BJ (cell line): ENCODE measurements at regions of chr11 and their contacts with region 1.

Region 1: GRCh38 chr11:75388386-75389275 is 10.7 kb upstream of the RPS3 start:
- DNase-seq: no peak
- H3K4me3 ChIP-seq: no peak overlapping the region
- H3K27me3 ChIP-seq: peaks cover 9% of the 10 kb centered on the region
- CTCF ChIP-seq: peak; percentile 81

Region 2: GRCh38 chr11:75103380-75104026 is 285.1 kb before region 1 on chr11:
- CTCF ChIA-PET with region 1: no interaction called
- POLR2A ChIA-PET with region 1: no interaction called
- DNase-seq: peak; percentile 29
- H3K4me3 ChIP-seq: no peak overlapping the region
- H3K27me3 ChIP-seq: no peaks in the 10 kb centered on the region; the same call in 1 of the 2 replicates
- CTCF ChIP-seq: no peak

Region 3: DNA sequence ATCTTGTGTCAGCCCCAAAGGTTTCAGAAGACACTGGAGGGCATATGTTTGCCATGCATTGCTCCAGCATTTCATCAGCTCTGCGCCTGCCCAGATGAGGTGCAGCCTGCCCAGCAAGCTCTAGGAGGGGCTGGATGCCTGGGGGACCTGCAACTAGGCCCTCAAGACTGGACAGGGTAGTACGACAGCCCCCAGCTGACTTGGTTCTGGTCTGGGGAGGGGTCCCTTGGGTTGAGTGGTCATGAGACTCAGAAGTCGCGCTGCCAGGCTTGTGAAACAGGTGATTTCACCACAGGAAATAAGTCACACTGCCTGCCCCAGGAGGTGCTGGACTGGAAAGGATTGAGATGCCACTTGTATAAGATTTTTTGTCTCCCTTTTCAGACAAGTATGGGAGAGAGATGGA is 124.7 kb before region 1 on chr11:
- CTCF ChIA-PET with region 1: no interaction called
- POLR2A ChIA-PET with region 1: no interaction called
- DNase-seq: no peak
- H3K4me3 ChIP-seq: no peak overlapping the region
- H3K27me3 ChIP-seq: peaks cover 2% of the 10 kb centered on the region; the same call in 1 of the 2 replicates
- CTCF ChIP-seq: no peak

Region 4: GRCh38 chr11:75280227-75280701 is 108.4 kb before region 1 on chr11:
- CTCF ChIA-PET with region 1: interaction called, 389 read pairs
- POLR2A ChIA-PET with region 1: no interaction called
- DNase-seq: no peak
- H3K4me3 ChIP-seq: no peak overlapping the region
- H3K27me3 ChIP-seq: no peaks in the 10 kb centered on the region
- CTCF ChIP-seq: peak; percentile 92

Region 5: DNA sequence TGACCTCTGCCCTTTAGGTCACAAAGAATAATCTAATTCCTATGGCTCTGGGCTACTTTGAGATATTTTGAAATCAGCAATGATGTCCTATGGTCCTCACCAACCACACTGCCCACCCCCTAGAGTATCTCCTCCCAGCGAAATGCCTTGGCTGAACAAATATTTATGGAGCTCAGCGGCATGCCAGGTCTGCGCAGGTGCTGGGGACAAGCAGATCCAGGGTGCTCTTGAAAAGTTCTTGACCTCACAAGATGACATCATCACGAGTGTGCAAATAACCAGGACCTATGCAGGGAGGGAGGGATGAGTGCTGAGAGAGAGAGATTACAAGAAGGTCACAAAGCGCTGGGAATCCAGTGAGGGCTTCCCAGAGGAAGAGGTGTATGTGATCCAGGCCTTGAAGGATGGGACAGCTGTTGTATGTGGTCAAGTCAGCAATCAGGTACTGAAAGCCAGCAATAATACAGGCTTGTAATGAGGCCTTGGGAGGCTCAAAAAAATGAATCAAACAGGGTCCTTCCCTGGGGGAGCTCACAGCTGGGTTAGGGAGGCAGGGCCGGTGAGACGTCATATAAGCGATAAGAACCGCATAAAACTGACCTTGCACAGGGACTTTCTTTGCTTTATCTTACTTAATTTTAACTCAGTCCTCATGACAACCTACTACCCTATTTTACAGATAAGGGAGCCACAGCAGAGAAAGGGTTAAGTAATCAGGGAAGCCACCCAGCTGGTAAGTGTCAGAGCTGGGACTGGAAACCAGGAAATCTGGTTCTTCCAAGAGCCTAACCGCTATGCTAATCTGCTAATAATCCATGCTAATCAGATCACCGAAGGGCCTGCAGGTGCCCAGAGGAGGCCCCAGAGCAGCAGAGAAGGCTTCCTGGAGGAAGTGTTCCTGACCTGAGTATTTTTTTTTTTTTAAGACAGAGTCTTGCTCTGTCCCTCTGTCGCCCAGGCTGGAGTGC is 45.4 kb before region 1 on chr11:
- CTCF ChIA-PET with region 1: interaction called, 54 read pairs
- POLR2A ChIA-PET with region 1: no interaction called
- DNase-seq: no peak
- H3K4me3 ChIP-seq: no peak overlapping the region
- H3K27me3 ChIP-seq: no peaks in the 10 kb centered on the region
- CTCF ChIP-seq: no peak

Region 6: GRCh38 chr11:75399344-75400145 is 10.9 kb after region 1 on chr11 and contains the start of gene RPS3:
- CTCF ChIA-PET with region 1: interaction called, 13 read pairs
- POLR2A ChIA-PET with region 1: no interaction called
- DNase-seq: peak; percentile 63
- H3K4me3 ChIP-seq: peak within 1 kb of the TSS; percentile 69
- H3K27me3 ChIP-seq: peaks cover 2% of the 10 kb centered on the region; the same call in 1 of the 2 replicates
- CTCF ChIP-seq: peak; percentile 23; the same call in 1 of the 2 replicates
- polyA plus RNA-seq, gene RPS3: 3,005 and 3,406 TPM in 2 replicates

Region 7: DNA sequence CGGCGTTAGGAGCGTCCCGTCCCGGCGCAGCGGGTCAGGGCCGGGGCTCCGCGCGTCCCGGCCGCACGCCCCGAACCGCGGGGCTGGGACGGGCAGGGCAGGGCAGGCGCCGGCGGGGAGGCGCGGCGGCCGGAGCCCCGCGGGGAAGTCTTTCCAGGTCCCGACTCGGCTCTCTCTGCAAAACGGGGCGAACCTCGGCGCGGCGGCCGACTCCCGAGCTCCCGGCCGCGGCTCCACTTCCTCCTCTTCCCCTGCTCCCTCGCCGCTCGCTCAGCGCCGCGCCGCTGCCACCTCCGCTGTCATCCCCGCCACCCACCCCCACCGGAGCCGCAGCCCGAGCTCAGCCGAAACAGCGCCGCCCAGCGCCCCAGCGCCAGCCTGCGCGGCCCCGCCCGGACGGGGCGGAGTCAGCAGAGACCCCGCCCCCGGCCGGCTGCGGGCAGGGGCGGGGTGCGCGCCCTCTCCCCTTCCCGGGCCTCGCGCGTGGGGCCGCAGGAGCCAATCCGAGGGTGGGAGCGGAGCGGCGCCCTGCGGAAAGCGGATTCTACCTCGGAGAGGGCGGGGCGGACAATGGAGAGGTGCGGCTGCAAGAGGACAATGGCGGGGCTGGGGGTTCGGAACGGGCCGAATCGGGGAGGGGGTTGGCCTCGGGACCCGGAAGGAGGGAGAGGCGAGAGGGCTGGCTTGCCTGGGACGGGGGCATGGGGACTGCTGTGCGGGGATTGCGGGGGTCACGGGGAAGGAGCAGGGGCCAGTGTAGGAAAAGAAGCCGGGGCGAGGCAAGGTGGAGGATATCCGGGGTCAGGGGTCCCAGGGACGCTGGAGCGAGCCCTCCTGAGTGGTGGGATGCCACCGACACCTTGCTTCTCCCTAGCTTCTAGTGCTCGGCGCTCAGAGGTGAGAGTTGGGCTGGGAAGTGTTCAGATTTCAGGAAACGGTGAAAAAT is 137.2 kb after region 1 on chr11 and contains the start of gene GDPD5:
- CTCF ChIA-PET with region 1: interaction called, 84 read pairs
- POLR2A ChIA-PET with region 1: no interaction called
- DNase-seq: no peak
- H3K4me3 ChIP-seq: peak within 1 kb of the TSS; percentile 89
- H3K27me3 ChIP-seq: peaks cover 15% of the 10 kb centered on the region; the same call in 1 of the 2 replicates
- CTCF ChIP-seq: peak; percentile 27; the same call in 1 of the 2 replicates
- polyA plus RNA-seq, gene GDPD5: 5.0 and 7.7 TPM in 2 replicates

Region 8: DNA sequence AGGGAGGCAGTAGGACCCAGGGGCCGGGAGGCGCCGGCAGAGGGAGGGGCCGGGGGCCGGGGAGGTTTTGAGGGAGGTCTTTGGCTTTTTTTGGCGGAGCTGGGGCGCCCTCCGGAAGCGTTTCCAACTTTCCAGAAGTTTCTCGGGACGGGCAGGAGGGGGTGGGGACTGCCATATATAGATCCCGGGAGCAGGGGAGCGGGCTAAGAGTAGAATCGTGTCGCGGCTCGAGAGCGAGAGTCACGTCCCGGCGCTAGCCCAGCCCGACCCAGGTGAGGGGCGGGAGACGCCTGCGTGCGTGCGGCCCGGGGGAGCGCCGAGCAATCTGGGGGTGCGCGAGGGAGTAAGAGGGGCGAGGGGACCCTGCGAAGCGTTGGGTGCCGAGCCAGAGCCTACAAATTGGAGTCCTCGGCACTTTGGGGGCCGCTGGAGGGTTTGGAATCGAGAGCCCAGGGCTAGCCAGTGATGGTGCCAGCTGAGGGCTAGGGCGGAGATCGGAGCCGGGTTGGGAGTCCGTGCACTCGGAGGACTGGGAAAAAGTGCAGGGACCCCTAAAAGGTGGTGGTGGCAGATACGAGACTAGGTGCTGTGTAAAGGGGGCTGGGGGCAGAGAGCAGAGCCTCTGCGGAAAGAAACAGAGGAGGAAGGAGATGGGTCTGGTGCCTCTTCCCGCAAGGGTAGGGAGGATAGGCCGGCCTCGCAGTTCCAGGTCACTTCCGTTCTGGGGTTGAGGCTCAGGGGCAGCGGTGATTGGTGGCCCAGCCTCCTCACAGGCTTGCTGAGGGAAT is 173.6 kb after region 1 on chr11 and contains the start of gene SERPINH1:
- CTCF ChIA-PET with region 1: interaction called, 10 read pairs
- POLR2A ChIA-PET with region 1: no interaction called
- DNase-seq: no peak
- H3K4me3 ChIP-seq: peak within 1 kb of the TSS; percentile 96
- H3K27me3 ChIP-seq: no peaks in the 10 kb centered on the region
- CTCF ChIP-seq: no peak
- polyA plus RNA-seq, gene SERPINH1: 1,158 and 1,604 TPM in 2 replicates

Region 9: DNA sequence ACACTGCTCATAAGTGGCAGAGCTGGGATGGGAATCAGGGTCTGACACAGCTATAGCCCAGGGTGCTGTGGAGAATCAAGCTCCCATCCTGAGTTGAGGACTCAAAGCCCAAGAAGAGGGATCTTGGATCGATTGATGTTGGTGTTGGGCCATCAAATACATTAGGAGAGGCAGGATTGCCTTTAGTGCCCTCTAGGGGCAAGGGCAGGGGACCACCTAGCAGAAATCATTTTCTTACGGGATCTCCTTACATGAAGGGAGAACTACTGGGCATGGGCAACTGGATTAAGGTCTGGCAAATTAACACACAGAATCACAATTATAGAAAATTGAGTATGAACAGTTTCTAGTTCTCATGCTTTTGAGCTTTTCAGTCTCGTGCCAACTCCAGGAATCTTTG is 1031.3 kb after region 1 on chr11:
- CTCF ChIA-PET with region 1: no interaction called
- POLR2A ChIA-PET with region 1: no interaction called
- DNase-seq: no peak
- H3K4me3 ChIP-seq: no peak overlapping the region
- H3K27me3 ChIP-seq: peaks cover 9% of the 10 kb centered on the region
- CTCF ChIP-seq: peak; percentile 29; the same call in 1 of the 2 replicates